Panc1 (cell line): ENCODE measurements at regions of chr1 and their contacts with region 1.

Region 1: DNA sequence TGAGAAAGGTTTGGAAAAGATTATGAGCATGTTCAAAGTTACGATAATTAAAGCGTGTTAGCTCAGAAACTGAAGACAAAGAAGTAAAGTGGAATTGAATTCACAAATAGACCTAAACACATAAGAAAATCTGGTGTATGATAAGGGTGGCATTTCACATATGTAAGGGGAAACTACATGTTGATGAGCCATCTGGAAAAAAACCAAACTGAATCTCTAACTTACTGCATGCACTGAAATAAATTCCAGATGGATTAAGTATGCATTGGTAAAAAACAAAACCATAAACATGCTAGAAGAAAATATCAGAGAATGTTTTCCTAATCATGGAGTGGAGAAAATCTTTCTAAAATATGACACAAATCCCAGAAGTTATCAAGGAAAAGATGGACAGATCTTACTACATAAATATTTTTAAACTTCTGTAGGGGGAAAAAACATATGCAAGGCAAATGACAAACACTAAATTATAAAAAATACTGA is 34.0 kb upstream of the CTPS1 start:
- DNase-seq: no peak
- ATAC-seq: no peak
- H3K4me3 ChIP-seq: no peak overlapping the region
- H3K27ac ChIP-seq: peak overlapping the region; percentile 82; the same call in 1 of the 2 replicates
- H3K4me1 ChIP-seq: peaks cover 12% of the 10 kb centered on the region
- H3K27me3 ChIP-seq: no peaks in the 10 kb centered on the region
- CTCF ChIP-seq: no peak

Region 2: GRCh38 chr1:40873863-40874453 is 71.6 kb before region 1 on chr1:
- CTCF ChIA-PET with region 1: interaction called, 3 read pairs
- POLR2A ChIA-PET with region 1: interaction called, 10 read pairs
- in situ Hi-C with region 1: no loop called
- intact Hi-C with region 1: no loop called
- DNase-seq: no peak
- ATAC-seq: no peak
- H3K4me3 ChIP-seq: no peak overlapping the region
- H3K27ac ChIP-seq: peak overlapping the region; percentile 88
- H3K4me1 ChIP-seq: peaks cover 17% of the 10 kb centered on the region; the same call in 1 of the 2 replicates
- H3K27me3 ChIP-seq: no peaks in the 10 kb centered on the region
- CTCF ChIP-seq: no peak